HEK293 (cell line): ENCODE measurements at regions of chr11 and their contacts with region 1.

Region 1: GRCh38 chr11:64317957-64318693 is at the start of gene PRDX5:
- H3K4me3 ChIP-seq: peak within 1 kb of the TSS; percentile 90
- H3K27ac ChIP-seq: peak within 1 kb of the TSS; percentile 88
- H3K4me1 ChIP-seq: no peaks in the 10 kb centered on the region
- CTCF ChIP-seq: peak; percentile 95

Region 2: GRCh38 chr11:64240394-64241174 is 77.5 kb before region 1 on chr11 and contains the start of gene FKBP2:
- CTCF ChIA-PET with region 1: interaction called, 3 read pairs
- POLR2A ChIA-PET with region 1: interaction called, 13 read pairs
- H3K4me3 ChIP-seq: peak within 1 kb of the TSS; percentile 75
- H3K27ac ChIP-seq: peak within 1 kb of the TSS; percentile 83
- H3K4me1 ChIP-seq: no peaks in the 10 kb centered on the region
- CTCF ChIP-seq: no peak

Region 3: DNA sequence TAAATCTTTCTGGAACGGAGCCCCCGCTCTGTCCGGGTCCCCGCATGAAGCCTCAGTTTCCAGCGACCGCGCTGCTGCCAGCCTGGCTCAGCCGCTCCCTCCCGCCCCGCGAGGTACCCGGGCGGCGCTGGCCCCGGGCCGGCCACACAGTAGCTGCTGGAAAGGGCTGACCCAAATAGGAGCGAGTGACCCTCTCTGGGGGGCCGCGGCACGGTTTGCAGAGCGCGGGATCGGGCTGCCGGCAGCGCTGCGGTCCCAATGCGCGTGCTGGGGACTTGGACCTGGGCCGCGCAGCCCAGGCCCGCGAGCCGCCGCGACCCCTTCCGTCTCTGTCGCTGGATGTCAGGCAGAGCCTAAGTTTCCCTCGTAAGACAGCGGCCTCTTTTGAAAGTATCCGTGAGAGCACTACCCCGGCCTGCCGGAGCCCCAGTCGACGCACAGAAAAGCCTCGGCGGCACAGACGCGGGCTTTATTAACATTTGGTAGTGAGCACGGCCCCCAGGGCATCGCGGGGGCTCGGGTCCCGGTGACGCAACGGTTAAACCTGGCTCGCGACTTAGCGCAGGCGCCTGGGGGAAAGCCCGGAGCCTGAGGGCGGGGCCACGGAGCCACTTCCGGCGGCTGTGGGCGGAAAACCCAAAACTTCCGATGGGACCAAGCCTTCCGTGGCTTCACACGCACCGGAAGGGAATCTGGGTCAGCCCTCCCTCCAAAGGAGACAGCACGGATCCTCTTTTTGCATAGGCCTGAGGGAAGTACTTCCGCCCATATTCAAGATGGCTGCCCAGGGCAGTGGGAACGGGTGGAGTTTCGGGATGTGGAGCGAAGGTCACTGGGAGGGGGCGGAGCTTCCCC is 48.5 kb before region 1 on chr11:
- CTCF ChIA-PET with region 1: interaction called, 9 read pairs
- POLR2A ChIA-PET with region 1: interaction called, 28 read pairs
- H3K4me3 ChIP-seq: peak overlapping the region; percentile 70
- H3K27ac ChIP-seq: peak overlapping the region; percentile 83
- H3K4me1 ChIP-seq: 0 out of 2 replicates have a peak, but pooled peaks cover 2% of the 10 kb centered on the region
- CTCF ChIP-seq: 0 out of 2 replicates have a peak, but pooled peaks have one; percentile 25

Region 4: DNA sequence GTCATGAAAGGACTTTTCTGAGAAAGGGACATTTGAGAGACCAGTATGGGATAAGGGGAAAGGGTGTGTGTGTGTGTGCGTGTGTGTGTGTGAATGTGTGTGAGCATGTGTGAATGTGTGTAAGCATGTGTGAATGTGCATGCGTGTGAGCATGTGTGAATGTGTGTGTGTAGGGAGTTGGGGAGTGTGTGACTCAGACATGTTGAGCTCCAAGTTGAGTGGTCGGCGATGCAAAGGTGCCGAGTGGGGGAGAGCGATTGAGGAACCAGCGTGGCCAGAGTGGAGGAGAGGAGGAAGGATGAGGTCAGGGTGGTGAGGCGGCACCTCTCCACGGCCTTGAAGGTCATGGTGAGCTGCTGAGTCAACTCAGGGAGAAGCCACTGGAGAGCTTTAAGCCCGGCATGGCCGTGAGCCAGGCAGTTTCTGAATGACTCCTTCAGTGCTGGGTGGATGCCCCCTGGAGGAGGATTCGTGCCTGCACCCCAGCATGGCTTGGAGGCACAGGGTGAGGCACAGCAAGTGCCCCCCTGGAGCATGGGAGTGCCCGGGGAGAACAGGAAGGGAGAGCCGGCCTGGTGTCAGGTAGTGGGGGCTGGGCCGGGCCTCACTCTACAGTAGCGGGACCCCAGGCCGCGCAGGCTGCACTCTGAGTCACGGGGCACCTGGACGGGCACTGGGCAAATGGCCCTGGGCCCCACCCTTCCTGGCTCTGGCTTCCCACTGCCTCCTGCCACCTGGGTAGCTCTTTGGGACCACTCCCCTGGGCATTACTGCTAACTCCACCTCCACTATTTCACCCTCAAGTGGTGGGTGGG is 13.6 kb after region 1 on chr11:
- CTCF ChIA-PET with region 1: interaction called, 41 read pairs
- POLR2A ChIA-PET with region 1: interaction called, 20 read pairs
- H3K4me3 ChIP-seq: no peak overlapping the region
- H3K27ac ChIP-seq: no peak overlapping the region
- H3K4me1 ChIP-seq: no peaks in the 10 kb centered on the region
- CTCF ChIP-seq: peak; percentile 60

Region 5: GRCh38 chr11:64341851-64342791 is 24.0 kb after region 1 on chr11:
- CTCF ChIA-PET with region 1: interaction called, 20 read pairs
- POLR2A ChIA-PET with region 1: interaction called, 20 read pairs
- H3K4me3 ChIP-seq: peak overlapping the region; percentile 25
- H3K27ac ChIP-seq: no peak overlapping the region; the same call in 1 of the 2 replicates
- H3K4me1 ChIP-seq: no peaks in the 10 kb centered on the region
- CTCF ChIP-seq: peak; percentile 39; the same call in 1 of the 2 replicates

Region 6: GRCh38 chr11:64348611-64349484 is 30.7 kb after region 1 on chr11:
- CTCF ChIA-PET with region 1: interaction called, 85 read pairs
- POLR2A ChIA-PET with region 1: interaction called, 34 read pairs
- H3K4me3 ChIP-seq: no peak overlapping the region
- H3K27ac ChIP-seq: no peak overlapping the region
- H3K4me1 ChIP-seq: no peaks in the 10 kb centered on the region
- CTCF ChIP-seq: no peak

Region 7: DNA sequence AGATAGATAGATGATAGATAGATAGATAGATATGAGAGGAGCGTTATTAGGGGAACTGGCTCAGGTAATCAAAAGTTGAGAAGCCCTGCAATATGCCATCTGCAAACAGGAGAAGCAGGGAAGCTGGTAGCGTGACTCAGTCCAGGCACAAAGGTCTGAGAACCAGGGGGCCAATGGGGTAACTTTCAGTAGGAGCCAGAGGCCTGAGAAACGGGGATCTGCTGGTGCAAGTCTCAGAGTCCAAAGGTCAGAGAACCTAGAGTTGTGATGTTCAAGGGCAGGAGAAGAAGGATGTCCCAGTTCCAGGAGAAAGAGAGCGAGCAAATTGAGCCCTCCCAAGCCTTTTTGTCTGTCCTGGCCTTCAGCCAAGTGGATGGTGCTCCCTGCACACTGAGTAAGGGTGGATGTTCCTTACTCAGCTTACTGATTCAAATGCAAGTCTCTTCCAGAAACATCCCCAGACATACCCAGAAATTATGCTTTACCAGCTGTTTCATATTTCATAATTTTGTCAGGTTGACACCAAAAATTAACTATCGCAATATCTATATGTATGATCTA is 185.1 kb after region 1 on chr11:
- CTCF ChIA-PET with region 1: no interaction called
- POLR2A ChIA-PET with region 1: no interaction called
- H3K4me3 ChIP-seq: no peak overlapping the region
- H3K27ac ChIP-seq: no peak overlapping the region
- H3K4me1 ChIP-seq: no peaks in the 10 kb centered on the region
- CTCF ChIP-seq: no peak